CD8-positive, alpha-beta T cell (primary cell): ENCODE measurements at regions of chr22 and their contacts with region 1.

Region 1: DNA sequence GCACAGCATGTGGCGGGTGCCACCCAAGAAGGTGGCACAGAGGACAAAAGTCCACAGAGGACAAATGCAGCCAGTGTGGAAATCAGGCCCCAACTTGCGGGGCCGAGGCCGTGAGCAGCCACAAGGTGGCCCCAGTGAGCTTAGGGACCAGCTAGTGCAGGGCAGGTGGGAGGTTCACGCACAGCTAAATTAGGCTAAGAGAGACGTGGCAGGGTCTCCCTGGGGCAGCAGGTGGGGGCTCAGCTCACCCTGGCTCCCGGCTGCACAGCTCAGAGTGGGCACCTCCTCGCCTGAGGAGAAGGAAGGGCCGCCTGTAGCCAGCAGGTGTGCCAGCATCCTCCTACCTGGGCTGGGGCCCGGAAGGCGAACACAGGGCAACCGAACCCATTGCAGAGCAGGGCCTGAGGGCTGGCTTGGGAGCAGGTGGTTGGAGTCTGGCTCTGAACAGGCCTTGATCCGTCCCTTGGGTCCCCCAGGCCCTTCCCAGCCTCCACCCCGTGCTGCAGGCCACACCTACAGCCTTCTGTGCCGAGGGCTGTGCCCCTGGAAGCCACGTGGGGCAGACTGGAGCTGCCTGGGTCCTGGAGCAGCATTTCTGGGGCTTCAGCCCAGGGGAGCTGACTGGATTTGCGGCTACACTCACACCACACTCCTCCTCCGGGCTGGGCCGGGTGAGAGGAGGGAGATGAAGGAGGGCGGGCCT is 26.1 kb upstream of the CELSR1 start:
- DNase-seq: peak; percentile 63 to 86 (median 76)
- ATAC-seq: peak; percentile 95
- H3K4me3 ChIP-seq: no peak overlapping the region
- H3K4me3 Mint-ChIP-seq: no peak overlapping the region
- H3K27ac ChIP-seq: no peak overlapping the region
- H3K27ac Mint-ChIP-seq: no peak overlapping the region
- H3K4me1 ChIP-seq: peaks cover 5% of the 10 kb centered on the region
- H3K4me1 Mint-ChIP-seq: peaks cover 2% of the 10 kb centered on the region
- H3K27me3 ChIP-seq: no peaks in the 10 kb centered on the region
- H3K27me3 Mint-ChIP-seq: no peaks in the 10 kb centered on the region
- CTCF ChIP-seq: peak; percentile 68

Region 2: GRCh38 chr22:46537225-46537945 is 26.1 kb before region 1 on chr22 and contains the start of gene CELSR1:
- CTCF ChIA-PET with region 1: no interaction called
- POLR2A ChIA-PET with region 1: no interaction called
- intact Hi-C with region 1: no loop called
- DNase-seq: peak in 2 of 9 experiments; percentile 27 to 28
- ATAC-seq: peak; percentile 21
- H3K4me3 ChIP-seq: no peak within 1 kb of the TSS
- H3K4me3 Mint-ChIP-seq: peak within 1 kb of the TSS; percentile 29
- H3K27ac ChIP-seq: no peak within 1 kb of the TSS
- H3K27ac Mint-ChIP-seq: no peak within 1 kb of the TSS
- H3K4me1 ChIP-seq: no peaks in the 10 kb centered on the region
- H3K4me1 Mint-ChIP-seq: peaks cover 7% of the 10 kb centered on the region
- H3K27me3 ChIP-seq: peaks cover 5 to 14% of the 10 kb centered on the region in 2 experiments
- H3K27me3 Mint-ChIP-seq: peaks cover 43% of the 10 kb centered on the region
- CTCF ChIP-seq: no peak
- total RNA-seq, gene CELSR1: 0.92 to 1.0 TPM

Region 3: DNA sequence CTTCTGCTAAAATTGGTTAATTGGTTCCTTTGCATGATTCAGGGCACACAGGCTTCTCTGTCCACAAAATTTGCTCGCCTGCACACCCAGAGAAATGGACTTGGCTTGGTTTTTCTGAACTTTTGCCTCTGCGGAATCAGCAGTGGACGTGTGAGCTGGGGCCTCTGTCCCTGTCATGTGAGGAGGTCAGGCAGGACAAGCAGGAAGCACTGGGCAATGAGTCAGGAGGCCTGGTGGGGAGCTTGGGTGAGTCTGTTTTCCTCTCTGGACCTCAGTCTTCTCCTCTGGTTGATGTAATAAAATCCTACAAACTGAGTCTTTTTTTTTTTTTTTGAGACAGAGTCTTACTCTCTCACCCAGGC is 15.7 kb before region 1 on chr22:
- CTCF ChIA-PET with region 1: interaction called, 18 read pairs
- POLR2A ChIA-PET with region 1: no interaction called
- intact Hi-C with region 1: no loop called
- DNase-seq: no peak
- ATAC-seq: no peak
- H3K4me3 ChIP-seq: no peak overlapping the region
- H3K4me3 Mint-ChIP-seq: no peak overlapping the region
- H3K27ac ChIP-seq: no peak overlapping the region
- H3K27ac Mint-ChIP-seq: no peak overlapping the region
- H3K4me1 ChIP-seq: no peaks in the 10 kb centered on the region
- H3K4me1 Mint-ChIP-seq: no peaks in the 10 kb centered on the region
- H3K27me3 ChIP-seq: no peaks in the 10 kb centered on the region
- H3K27me3 Mint-ChIP-seq: peaks cover 21% of the 10 kb centered on the region
- CTCF ChIP-seq: no peak

Region 4: DNA sequence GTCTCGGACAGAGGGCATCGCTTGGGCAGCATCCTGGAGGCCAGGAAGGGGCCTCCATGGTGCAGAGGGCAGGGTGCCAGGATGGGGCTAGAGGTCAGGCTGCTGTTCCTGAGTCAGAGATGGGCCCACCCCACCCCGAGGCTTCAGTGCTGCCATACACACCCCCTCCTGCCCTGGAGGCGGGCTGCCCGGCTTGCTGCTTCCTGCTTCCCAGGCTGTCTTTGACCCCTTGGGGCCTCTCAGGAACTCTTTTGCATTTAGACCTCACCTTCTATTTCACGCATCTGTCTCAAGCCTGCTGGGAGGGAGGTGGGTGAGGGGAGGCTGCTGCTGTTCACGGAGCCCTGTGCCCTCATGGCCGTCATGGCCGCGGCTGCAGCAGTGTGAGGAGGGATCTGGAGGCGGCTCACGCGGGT is 50.1 kb after region 1 on chr22:
- CTCF ChIA-PET with region 1: no interaction called
- POLR2A ChIA-PET with region 1: no interaction called
- intact Hi-C with region 1: loop called in 1 of 2 experiments (anchors 5 kb)
- DNase-seq: peak in 2 of 9 experiments; percentile 16 to 31
- ATAC-seq: no peak
- H3K4me3 ChIP-seq: peak overlapping the region; percentile 49 to 52
- H3K4me3 Mint-ChIP-seq: peak overlapping the region; percentile 90
- H3K27ac ChIP-seq: peak overlapping the region; percentile 20 to 51
- H3K27ac Mint-ChIP-seq: peak overlapping the region; percentile 90
- H3K4me1 ChIP-seq: peaks cover 25% of the 10 kb centered on the region
- H3K4me1 Mint-ChIP-seq: peaks cover 28% of the 10 kb centered on the region
- H3K27me3 ChIP-seq: no peaks in the 10 kb centered on the region
- H3K27me3 Mint-ChIP-seq: no peaks in the 10 kb centered on the region
- CTCF ChIP-seq: no peak

Region 5: GRCh38 chr22:46638601-46639431 is 75.3 kb after region 1 on chr22:
- CTCF ChIA-PET with region 1: interaction called, 17 read pairs
- POLR2A ChIA-PET with region 1: no interaction called
- intact Hi-C with region 1: loop called in 1 of 2 experiments (anchors 1 kb)
- DNase-seq: peak in 2 of 9 experiments; percentile 35 to 37
- ATAC-seq: no peak
- H3K4me3 ChIP-seq: no peak overlapping the region
- H3K4me3 Mint-ChIP-seq: no peak overlapping the region
- H3K27ac ChIP-seq: no peak overlapping the region
- H3K27ac Mint-ChIP-seq: no peak overlapping the region
- H3K4me1 ChIP-seq: no peaks in the 10 kb centered on the region
- H3K4me1 Mint-ChIP-seq: no peaks in the 10 kb centered on the region
- H3K27me3 ChIP-seq: no peaks in the 10 kb centered on the region
- H3K27me3 Mint-ChIP-seq: no peaks in the 10 kb centered on the region
- CTCF ChIP-seq: no peak

Region 6: GRCh38 chr22:46737976-46738646 is 174.6 kb after region 1 on chr22 and contains the start of gene CERK:
- CTCF ChIA-PET with region 1: interaction called, 7 read pairs
- POLR2A ChIA-PET with region 1: no interaction called
- intact Hi-C with region 1: loop called in 1 of 2 experiments (anchors 1 kb)
- DNase-seq: peak; percentile 39 to 84 (median 70)
- ATAC-seq: peak; percentile 71
- H3K4me3 ChIP-seq: peak within 1 kb of the TSS; percentile 59 to 70
- H3K4me3 Mint-ChIP-seq: peak within 1 kb of the TSS; percentile 99
- H3K27ac ChIP-seq: peak within 1 kb of the TSS; percentile 59 to 81
- H3K27ac Mint-ChIP-seq: peak within 1 kb of the TSS; percentile 99
- H3K4me1 ChIP-seq: peaks cover 49% of the 10 kb centered on the region
- H3K4me1 Mint-ChIP-seq: peaks cover 44% of the 10 kb centered on the region
- H3K27me3 ChIP-seq: no peaks in the 10 kb centered on the region
- H3K27me3 Mint-ChIP-seq: no peaks in the 10 kb centered on the region
- CTCF ChIP-seq: no peak
- total RNA-seq, gene CERK: 93.5 to 95.0 TPM